CD8-positive, alpha-beta memory T cell (primary cell): ENCODE measurements at regions of chr16 and their contacts with region 1.

Region 1: GRCh38 chr16:4402439-4403132 is 13.8 kb downstream of the CORO7 start:
- DNase-seq: peak; percentile 47 to 75 (median 53)
- H3K4me3 ChIP-seq: no peak overlapping the region
- H3K4me3 Mint-ChIP-seq: peak overlapping the region in 1 of 7 donors; percentile 42
- H3K27ac ChIP-seq: no peak overlapping the region
- H3K27ac Mint-ChIP-seq: peak overlapping the region in 4 of 8 donors; percentile 47 to 87 (median 65)
- H3K4me1 ChIP-seq: no peaks in the 10 kb centered on the region
- H3K4me1 Mint-ChIP-seq: peaks cover 23 to 43% (median 31%) of the 10 kb centered on the region in 3 donors
- H3K27me3 ChIP-seq: no peaks in the 10 kb centered on the region
- H3K27me3 Mint-ChIP-seq: peaks cover 0 to 9% of the 10 kb centered on the region in 2 donors

Region 2: GRCh38 chr16:4373863-4374742 is 28.5 kb before region 1 on chr16:
- CTCF ChIA-PET with region 1: interaction called, 12 read pairs
- POLR2A ChIA-PET with region 1: interaction called, 3 read pairs
- DNase-seq: no peak
- H3K4me3 ChIP-seq: no peak overlapping the region
- H3K4me3 Mint-ChIP-seq: peak overlapping the region in 1 of 7 donors; percentile 23
- H3K27ac ChIP-seq: no peak overlapping the region
- H3K27ac Mint-ChIP-seq: peak overlapping the region in 1 of 8 donors; percentile 61
- H3K4me1 ChIP-seq: peaks cover 18% of the 10 kb centered on the region
- H3K4me1 Mint-ChIP-seq: peaks cover 11 to 71% (median 17%) of the 10 kb centered on the region in 3 donors
- H3K27me3 ChIP-seq: no peaks in the 10 kb centered on the region
- H3K27me3 Mint-ChIP-seq: no peaks in the 10 kb centered on the region

Region 3: DNA sequence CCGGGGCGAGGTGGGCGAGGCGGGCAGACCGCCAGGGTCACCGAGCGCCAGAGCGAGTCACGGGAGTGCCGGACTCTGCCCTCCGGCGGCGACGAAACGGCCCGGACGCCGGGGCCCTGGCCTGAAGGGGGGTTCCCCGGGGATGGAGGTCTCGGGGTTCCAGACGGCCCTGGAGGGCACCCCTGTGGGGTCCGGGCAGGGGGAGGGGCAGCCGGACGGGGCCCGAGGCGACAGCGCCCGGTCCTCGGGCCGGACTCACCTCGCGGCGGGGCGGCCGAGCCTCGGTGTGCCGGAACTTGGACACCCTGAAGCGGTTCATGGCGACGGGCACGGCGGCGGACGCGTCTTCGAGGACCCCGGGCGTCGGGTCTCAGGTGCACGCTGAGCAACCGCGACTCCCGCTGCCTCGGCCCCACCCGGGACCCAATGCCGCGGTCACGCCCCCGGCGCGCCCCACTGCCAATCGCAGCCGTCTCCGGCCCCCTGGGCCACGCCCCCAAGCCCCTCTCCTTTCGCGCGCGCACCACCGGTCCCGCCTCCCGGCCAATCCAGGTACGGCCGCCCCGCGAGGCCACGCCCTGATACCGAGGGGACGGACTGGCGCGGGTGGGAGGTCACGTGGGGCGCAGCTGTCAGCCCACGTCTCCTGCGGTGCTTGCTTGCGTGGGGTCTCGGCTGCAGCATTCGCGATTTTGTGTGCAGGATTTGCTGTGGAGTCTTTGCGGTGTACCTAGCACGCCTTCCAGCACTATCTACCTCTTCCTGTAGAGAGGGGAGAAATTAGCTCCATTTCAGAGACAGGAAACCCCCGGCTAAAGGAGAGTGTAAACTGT is 13.8 kb after region 1 on chr16 and contains the start of gene CORO7:
- CTCF ChIA-PET with region 1: interaction called, 34 read pairs
- POLR2A ChIA-PET with region 1: no interaction called
- DNase-seq: peak; percentile 99 to 100 (median 99)
- H3K4me3 ChIP-seq: peak within 1 kb of the TSS; percentile 88
- H3K4me3 Mint-ChIP-seq: peak within 1 kb of the TSS; percentile 89 to 98 (median 95)
- H3K27ac ChIP-seq: peak within 1 kb of the TSS; percentile 98
- H3K27ac Mint-ChIP-seq: peak within 1 kb of the TSS; percentile 91 to 100 (median 98)
- H3K4me1 ChIP-seq: peaks cover 40% of the 10 kb centered on the region
- H3K4me1 Mint-ChIP-seq: peaks cover 38 to 44% (median 40%) of the 10 kb centered on the region in 3 donors
- H3K27me3 ChIP-seq: no peaks in the 10 kb centered on the region
- H3K27me3 Mint-ChIP-seq: peaks cover 0 to 2% of the 10 kb centered on the region in 2 donors
- total RNA-seq, gene CORO7: 92.0 to 96.3 TPM